Mammary epithelial cell (primary cell): ENCODE measurements at regions of chr3 and their contacts with region 1.

Region 1: GRCh38 chr3:5136211-5136918 is 14.3 kb downstream of the ARL8B start:
- DNase-seq: peak; percentile 64
- H3K4me3 ChIP-seq: no peak overlapping the region
- H3K27ac ChIP-seq: peak overlapping the region; percentile 73
- H3K4me1 ChIP-seq: peaks cover 38% of the 10 kb centered on the region
- H3K27me3 ChIP-seq: no peaks in the 10 kb centered on the region
- CTCF ChIP-seq: peak; percentile 50 to 61

Region 2: GRCh38 chr3:4986782-4987537 is 149.4 kb before region 1 on chr3:
- CTCF ChIA-PET with region 1: no interaction called
- dilution Hi-C with region 1: loop called (anchors 5 kb)
- in situ Hi-C with region 1: no loop called
- intact Hi-C with region 1: no loop called
- DNase-seq: peak; percentile 99
- H3K4me3 ChIP-seq: peak overlapping the region; percentile 1 to 31 (median 4)
- H3K27ac ChIP-seq: peak overlapping the region; percentile 96
- H3K4me1 ChIP-seq: peaks cover 49% of the 10 kb centered on the region
- H3K27me3 ChIP-seq: no peaks in the 10 kb centered on the region
- CTCF ChIP-seq: no peak

Region 3: GRCh38 chr3:5187156-5187919 is 51.0 kb after region 1 on chr3 and contains the start of gene EDEM1:
- CTCF ChIA-PET with region 1: no interaction called
- dilution Hi-C with region 1: loop called (anchors 5 kb)
- in situ Hi-C with region 1: no loop called
- intact Hi-C with region 1: loop called (anchors 2 kb)
- DNase-seq: peak; percentile 95
- H3K4me3 ChIP-seq: peak within 1 kb of the TSS; percentile 61 to 89 (median 86)
- H3K27ac ChIP-seq: peak within 1 kb of the TSS; percentile 94
- H3K4me1 ChIP-seq: peaks cover 11% of the 10 kb centered on the region
- H3K27me3 ChIP-seq: no peaks in the 10 kb centered on the region
- CTCF ChIP-seq: no peak
- total RNA-seq, gene EDEM1: 78.0 to 98.0 TPM

Region 4: DNA sequence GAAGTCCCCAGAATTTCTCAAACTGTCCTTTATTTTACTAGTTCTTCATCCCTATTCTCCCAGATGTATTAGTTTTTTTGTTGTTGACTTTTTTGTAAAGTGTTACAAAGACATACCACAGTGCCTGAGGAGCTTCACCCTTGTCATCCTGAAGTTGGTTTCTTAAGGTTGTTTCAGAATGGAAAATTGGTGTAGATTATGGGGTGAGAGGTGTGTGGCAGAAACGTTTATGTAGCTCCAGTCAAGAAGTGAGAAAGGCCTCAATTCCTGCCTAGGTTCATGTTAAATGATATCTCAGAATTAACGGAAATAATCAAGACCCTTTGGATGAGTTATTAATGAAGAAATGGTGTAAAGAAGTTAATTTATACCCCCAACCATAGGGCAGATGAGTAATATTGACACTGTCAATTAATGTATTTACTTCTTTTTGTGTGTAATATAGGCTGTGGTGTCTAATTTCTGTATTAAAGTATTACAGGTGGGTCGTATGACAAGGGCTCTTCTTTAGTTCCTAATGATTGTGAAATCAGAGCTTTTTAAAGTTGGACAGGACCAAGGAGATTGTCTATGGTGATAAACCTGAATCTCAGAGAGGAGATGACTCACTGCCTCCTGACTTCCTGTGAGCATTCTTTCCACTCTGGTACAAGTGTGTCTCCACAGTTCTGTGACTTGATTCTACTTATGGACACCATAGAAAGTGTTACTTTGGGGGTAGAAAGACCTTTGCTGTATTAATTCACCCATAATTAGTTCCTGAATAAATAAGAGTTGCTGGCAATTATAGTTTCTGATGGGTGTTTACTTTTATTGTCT is 58.2 kb after region 1 on chr3:
- CTCF ChIA-PET with region 1: interaction called, 23 read pairs
- dilution Hi-C with region 1: loop called (anchors 5 kb)
- in situ Hi-C with region 1: no loop called
- intact Hi-C with region 1: loop called (anchors 2 kb)
- DNase-seq: peak; percentile 90
- H3K4me3 ChIP-seq: peak overlapping the region in 1 of 3 experiments; percentile 3
- H3K27ac ChIP-seq: peak overlapping the region; percentile 95
- H3K4me1 ChIP-seq: peaks cover 69% of the 10 kb centered on the region
- H3K27me3 ChIP-seq: no peaks in the 10 kb centered on the region
- CTCF ChIP-seq: no peak

Region 5: GRCh38 chr3:5357089-5357488 is 220.7 kb after region 1 on chr3:
- CTCF ChIA-PET with region 1: no interaction called
- dilution Hi-C with region 1: no loop called
- in situ Hi-C with region 1: no loop called
- intact Hi-C with region 1: no loop called
- DNase-seq: no peak
- H3K4me3 ChIP-seq: no peak overlapping the region
- H3K27ac ChIP-seq: no peak overlapping the region
- H3K4me1 ChIP-seq: no peaks in the 10 kb centered on the region
- H3K27me3 ChIP-seq: no peaks in the 10 kb centered on the region
- CTCF ChIP-seq: no peak